Gastrocnemius medialis (tissue), 4 donors: ENCODE measurements at regions of chr10 and their contacts with region 1.

Region 1: DNA sequence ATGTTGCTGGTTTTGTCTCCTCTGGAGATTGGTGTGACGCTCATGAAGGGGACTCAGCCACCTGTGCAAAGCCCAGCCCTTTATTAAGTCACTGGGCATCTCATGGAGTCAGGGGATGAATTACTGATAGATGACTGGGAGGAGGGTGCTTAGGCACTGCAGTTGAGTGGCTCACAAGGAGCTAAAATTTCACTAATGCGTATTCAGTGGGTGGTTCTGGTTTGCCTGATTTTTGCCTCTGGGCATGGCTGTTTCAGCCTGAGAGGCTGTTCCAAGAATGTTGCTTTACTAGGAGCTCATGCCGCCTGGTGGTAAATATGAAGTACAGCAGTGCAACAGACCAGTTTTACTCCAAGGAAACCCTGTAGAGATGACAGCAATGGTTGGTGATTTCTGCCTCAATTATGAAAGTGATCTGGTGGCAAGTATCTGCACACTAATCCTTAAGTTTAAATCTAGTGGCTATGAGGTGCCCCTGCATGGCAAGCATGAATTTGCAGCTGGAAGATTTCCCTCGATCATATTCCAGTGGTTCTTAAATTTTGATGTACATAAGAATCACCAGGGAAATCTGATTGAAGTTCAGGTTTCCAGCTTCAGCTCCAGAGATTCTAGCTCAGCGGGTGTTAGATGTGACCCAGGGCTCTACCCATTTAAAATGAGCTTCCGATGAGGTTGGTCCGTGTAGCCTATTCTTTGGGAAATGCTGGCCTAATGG is 19.9 kb downstream of the ACTA2 start:
- DNase-seq: peak in 1 of 2 donors; percentile 52
- ATAC-seq: peak; percentile 61 to 66
- H3K4me3 ChIP-seq: no peak overlapping the region
- H3K27ac ChIP-seq: peak overlapping the region in 2 of 4 donors; percentile 1 to 32
- H3K4me1 ChIP-seq: peaks cover 13 to 16% of the 10 kb centered on the region in 2 donors
- H3K27me3 ChIP-seq: no peaks in the 10 kb centered on the region
- CTCF ChIP-seq: peak; percentile 68 to 83 (median 81)
- POLR2A ChIP-seq: no peak

Region 2: GRCh38 chr10:88835096-88835909 is 97.4 kb before region 1 on chr10:
- in situ Hi-C with region 1: loop called (anchors 5 kb)
- intact Hi-C with region 1: loop called (anchors 2 kb)
- DNase-seq: peak; percentile 54 to 66
- ATAC-seq: peak; percentile 81 to 87
- H3K4me3 ChIP-seq: no peak overlapping the region
- H3K27ac ChIP-seq: no peak overlapping the region
- H3K4me1 ChIP-seq: no peaks in the 10 kb centered on the region
- H3K27me3 ChIP-seq: no peaks in the 10 kb centered on the region
- CTCF ChIP-seq: peak; percentile 69 to 82 (median 73)
- POLR2A ChIP-seq: no peak

Region 3: DNA sequence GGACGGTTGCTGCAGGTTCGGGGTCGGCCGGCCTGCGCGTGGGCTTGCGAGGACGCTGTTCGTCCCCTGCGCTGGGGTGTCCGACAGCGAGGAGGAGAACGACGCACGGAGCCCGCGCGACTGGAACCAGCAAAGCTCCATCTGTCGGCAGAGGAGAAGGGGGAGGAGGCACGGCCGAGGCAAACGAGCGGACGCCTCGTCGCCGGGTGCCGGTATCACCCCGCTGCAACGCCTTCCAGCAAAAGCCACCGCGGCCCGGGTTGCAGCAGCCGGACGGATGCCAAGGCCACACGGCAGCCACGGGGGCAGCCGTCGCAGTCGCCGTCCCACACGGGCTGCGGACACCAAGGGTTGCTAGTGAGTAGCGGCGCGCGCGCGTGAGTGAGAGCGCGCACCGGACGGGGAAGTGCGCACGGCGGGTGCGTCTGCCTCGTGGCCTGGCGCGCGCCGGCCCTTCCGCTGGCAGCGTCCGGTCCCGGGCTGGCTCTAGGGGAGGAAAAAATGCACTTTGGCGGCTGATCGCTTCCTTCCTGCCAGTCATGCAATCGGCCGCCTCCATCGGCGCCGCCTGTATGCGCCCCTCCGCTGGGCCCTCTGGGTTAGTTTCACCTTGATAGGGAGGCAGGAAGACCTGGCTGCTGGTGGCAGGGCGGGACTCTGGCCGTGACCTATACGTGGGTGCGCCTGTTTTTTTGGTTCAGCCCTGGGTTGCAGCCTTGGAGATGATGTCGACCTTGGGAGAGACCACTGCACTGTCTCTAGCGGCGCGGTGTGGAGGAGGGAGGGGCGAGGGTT is 52.2 kb before region 1 on chr10:
- in situ Hi-C with region 1: no loop called
- intact Hi-C with region 1: loop called (anchors 2 kb)
- DNase-seq: peak; percentile 34 to 60
- ATAC-seq: peak; percentile 76 to 81
- H3K4me3 ChIP-seq: peak overlapping the region; percentile 66 to 85 (median 74)
- H3K27ac ChIP-seq: peak overlapping the region; percentile 67 to 83 (median 80)
- H3K4me1 ChIP-seq: peaks cover 8 to 21% of the 10 kb centered on the region in 2 donors
- H3K27me3 ChIP-seq: peaks cover 0 to 10% (median 6%) of the 10 kb centered on the region in 3 donors
- CTCF ChIP-seq: peak in 1 of 5 experiments; percentile 23
- POLR2A ChIP-seq: peak; percentile 34 to 62

Region 4: DNA sequence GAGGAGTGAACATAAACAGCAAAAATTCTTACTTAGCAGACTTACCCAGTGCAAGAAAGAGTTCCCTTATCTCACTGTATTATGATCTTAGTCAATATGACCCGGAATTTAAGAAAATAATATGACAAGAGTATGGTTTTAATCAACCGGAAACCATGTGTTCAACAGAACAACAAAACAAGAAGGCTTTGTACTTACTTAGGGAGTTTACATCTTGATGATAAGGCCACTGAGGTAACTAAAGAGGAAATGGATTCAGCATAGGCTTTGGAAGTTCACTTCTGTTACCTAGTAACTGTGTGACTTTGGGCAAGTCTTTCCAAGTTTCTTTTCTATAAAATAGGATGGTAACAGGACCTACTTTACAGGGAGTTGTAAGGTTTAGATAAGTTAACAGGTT is 50.5 kb after region 1 on chr10:
- in situ Hi-C with region 1: loop called (anchors 5 to 10 kb)
- intact Hi-C with region 1: loop called (anchors 1 kb)
- DNase-seq: no peak
- ATAC-seq: no peak
- H3K4me3 ChIP-seq: no peak overlapping the region
- H3K27ac ChIP-seq: peak overlapping the region; percentile 24 to 53 (median 40)
- H3K4me1 ChIP-seq: peaks cover 0 to 9% of the 10 kb centered on the region in 2 donors
- H3K27me3 ChIP-seq: no peaks in the 10 kb centered on the region
- CTCF ChIP-seq: no peak
- POLR2A ChIP-seq: no peak

Region 5: DNA sequence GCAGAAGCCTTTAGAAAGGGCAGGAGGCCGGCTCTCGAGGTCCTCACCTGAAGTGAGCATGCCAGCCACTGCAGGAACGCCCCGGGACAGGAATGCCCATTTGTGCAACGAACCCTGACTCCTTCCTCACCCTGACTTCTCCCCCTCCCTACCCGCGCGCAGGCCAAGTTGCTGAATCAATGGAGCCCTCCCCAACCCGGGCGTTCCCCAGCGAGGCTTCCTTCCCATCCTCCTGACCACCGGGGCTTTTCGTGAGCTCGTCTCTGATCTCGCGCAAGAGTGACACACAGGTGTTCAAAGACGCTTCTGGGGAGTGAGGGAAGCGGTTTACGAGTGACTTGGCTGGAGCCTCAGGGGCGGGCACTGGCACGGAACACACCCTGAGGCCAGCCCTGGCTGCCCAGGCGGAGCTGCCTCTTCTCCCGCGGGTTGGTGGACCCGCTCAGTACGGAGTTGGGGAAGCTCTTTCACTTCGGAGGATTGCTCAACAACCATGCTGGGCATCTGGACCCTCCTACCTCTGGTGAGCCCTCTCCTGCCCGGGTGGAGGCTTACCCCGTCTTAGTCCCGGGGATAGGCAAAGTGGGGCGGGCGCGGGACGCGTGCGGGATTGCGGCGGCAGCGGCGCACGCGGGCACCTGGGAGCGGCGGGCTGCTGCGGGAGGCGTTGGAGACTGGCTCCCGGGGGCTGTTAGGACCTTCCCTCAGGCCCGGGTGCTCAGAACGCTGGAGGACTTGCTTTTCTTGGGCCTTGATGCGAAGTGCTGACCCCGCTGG is 57.9 kb after region 1 on chr10 and contains the start of gene FAS:
- in situ Hi-C with region 1: loop called in 2 of 4 experiments (anchors 10 kb)
- intact Hi-C with region 1: loop called (anchors 1 kb)
- DNase-seq: peak; percentile 24 to 54
- ATAC-seq: peak; percentile 52 to 66
- H3K4me3 ChIP-seq: peak within 1 kb of the TSS; percentile 72 to 88 (median 82)
- H3K27ac ChIP-seq: peak within 1 kb of the TSS; percentile 76 to 87 (median 84)
- H3K4me1 ChIP-seq: peaks cover 7 to 9% of the 10 kb centered on the region in 2 donors
- H3K27me3 ChIP-seq: no peaks in the 10 kb centered on the region
- CTCF ChIP-seq: no peak
- POLR2A ChIP-seq: peak; percentile 1 to 27
- total RNA-seq, gene FAS: 2.7 to 5.9 (median 4.9) TPM

Region 6: DNA sequence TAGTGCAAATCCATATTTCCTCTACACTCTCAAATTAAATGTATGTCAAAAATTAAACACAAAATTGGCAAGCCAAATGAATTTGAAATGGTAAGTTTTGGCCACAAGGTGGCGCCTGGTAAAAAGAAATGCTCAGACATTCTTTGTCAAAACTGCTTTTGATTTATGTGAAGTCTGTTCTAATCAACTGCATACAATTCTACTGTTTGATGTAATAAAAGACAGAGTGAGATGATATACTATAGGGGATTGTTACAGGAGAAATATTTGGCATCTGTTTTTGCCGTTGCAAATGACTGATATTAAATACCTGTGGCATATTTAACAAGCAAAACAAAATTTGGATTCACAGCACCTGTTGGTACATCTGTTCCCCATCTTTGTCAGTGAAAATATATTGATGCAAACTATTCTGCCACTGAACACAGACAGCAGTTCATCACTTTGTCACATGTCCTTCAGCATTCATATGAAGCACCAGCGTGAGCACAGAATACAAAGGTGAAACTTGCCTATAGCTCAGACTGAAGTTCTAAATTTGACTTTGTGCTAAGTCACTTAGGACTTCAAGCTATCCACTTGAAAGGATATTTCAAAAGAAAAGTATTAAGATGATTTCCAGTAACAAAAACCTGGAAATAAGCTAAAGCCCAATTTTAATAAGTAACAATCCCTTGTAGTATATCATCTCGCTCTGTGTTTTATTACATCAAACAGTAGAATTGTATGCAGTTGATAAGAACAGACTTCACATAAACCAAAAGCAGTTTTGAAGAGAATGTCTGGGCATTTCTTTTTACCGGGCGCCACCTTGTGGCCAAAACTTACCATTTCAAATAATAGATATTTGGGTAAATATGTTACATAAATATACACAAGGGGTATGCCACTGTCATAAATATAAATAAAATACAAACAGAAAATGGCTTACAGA is 284.6 kb after region 1 on chr10:
- in situ Hi-C with region 1: loop called in 3 of 4 experiments (anchors 10 kb)
- intact Hi-C with region 1: loop called (anchors 5 kb)
- DNase-seq: peak in 1 of 2 donors; percentile 28
- ATAC-seq: peak; percentile 46 to 82
- H3K4me3 ChIP-seq: peak overlapping the region in 2 of 4 donors; percentile 9 to 15
- H3K27ac ChIP-seq: peak overlapping the region; percentile 59 to 68 (median 62)
- H3K4me1 ChIP-seq: peaks cover 6 to 8% of the 10 kb centered on the region in 2 donors
- H3K27me3 ChIP-seq: no peaks in the 10 kb centered on the region
- CTCF ChIP-seq: peak; percentile 63 to 80 (median 68)
- POLR2A ChIP-seq: no peak